Prostate gland (tissue), 2 donors: ENCODE measurements at regions of chr6 and their contacts with region 1.

Region 1: GRCh38 chr6:73520688-73521350 is at the start of gene EEF1A1:
- DNase-seq: peak; percentile 100
- H3K4me3 ChIP-seq: peak within 1 kb of the TSS; percentile 88 to 97
- H3K27ac ChIP-seq: peak within 1 kb of the TSS; percentile 100
- H3K4me1 ChIP-seq: peaks cover 6% of the 10 kb centered on the region
- H3K27me3 ChIP-seq: no peaks in the 10 kb centered on the region
- CTCF ChIP-seq: peak in 2 of 4 experiments; percentile 11 to 19
- POLR2A ChIP-seq: peak; percentile 99
- total RNA-seq, gene EEF1A1: 6,474 to 10,301 TPM

Region 2: GRCh38 chr6:73481969-73482368 is 38.9 kb before region 1 on chr6:
- intact Hi-C with region 1: no loop called
- DNase-seq: no peak
- H3K4me3 ChIP-seq: no peak overlapping the region
- H3K27ac ChIP-seq: no peak overlapping the region
- H3K4me1 ChIP-seq: no peaks in the 10 kb centered on the region
- H3K27me3 ChIP-seq: no peaks in the 10 kb centered on the region
- CTCF ChIP-seq: no peak
- POLR2A ChIP-seq: no peak

Region 3: GRCh38 chr6:73585566-73586415 is 65.0 kb after region 1 on chr6:
- intact Hi-C with region 1: loop called (anchors 1 kb)
- DNase-seq: peak; percentile 73
- H3K4me3 ChIP-seq: peak overlapping the region in 1 of 2 donors; percentile 13
- H3K27ac ChIP-seq: peak overlapping the region; percentile 89 to 90
- H3K4me1 ChIP-seq: no peaks in the 10 kb centered on the region
- H3K27me3 ChIP-seq: no peaks in the 10 kb centered on the region
- CTCF ChIP-seq: no peak
- POLR2A ChIP-seq: peak; percentile 66

Region 4: DNA sequence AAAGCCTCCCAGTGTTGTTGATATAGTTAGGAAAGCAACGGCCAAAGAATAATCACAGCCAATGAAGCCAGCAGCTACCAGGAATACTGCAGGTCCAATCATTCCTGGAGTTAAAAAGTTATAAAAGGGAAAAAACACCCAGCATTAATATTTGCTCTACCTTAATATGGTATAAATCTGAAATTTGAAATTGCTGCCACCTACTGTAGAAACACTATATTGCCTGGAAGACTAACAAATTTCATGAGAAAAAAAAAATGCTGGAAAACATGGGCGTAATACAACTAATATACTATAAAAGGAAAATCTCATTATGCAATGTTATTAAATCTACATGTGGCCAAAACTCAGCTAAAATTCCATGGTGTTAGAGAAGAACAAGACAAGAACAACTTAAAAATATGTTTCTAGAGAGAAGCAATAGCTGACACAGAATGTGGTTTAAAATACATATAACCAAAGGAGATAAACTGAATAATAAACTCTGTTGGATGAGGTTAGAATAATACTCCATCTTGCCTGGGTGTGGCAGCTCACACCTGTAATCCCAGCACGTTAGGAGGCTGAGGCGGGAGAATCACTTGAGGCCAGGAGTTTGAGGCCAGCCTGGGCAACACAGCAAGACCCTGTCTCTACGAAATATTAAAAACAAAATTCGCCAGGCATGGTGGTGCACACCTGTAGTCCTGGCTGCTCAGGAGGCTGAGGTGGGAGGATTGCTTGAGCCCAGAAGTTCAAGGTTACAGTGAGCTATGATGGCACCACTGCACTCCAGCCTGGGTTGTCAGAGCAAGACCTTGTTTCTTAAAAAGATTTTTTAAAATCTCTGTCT is 89.8 kb after region 1 on chr6:
- intact Hi-C with region 1: loop called (anchors 1 kb)
- DNase-seq: no peak
- H3K4me3 ChIP-seq: no peak overlapping the region
- H3K27ac ChIP-seq: no peak overlapping the region
- H3K4me1 ChIP-seq: no peaks in the 10 kb centered on the region
- H3K27me3 ChIP-seq: no peaks in the 10 kb centered on the region
- CTCF ChIP-seq: peak; percentile 29 to 78 (median 70)
- POLR2A ChIP-seq: no peak

Region 5: GRCh38 chr6:73653571-73654424 is 133.0 kb after region 1 on chr6 and contains the start of gene SLC17A5:
- intact Hi-C with region 1: loop called (anchors 2 kb)
- DNase-seq: peak; percentile 92
- H3K4me3 ChIP-seq: peak within 1 kb of the TSS; percentile 98 to 100
- H3K27ac ChIP-seq: peak within 1 kb of the TSS; percentile 98
- H3K4me1 ChIP-seq: no peaks in the 10 kb centered on the region
- H3K27me3 ChIP-seq: no peaks in the 10 kb centered on the region
- CTCF ChIP-seq: peak in 1 of 4 experiments; percentile 11
- POLR2A ChIP-seq: peak; percentile 68
- total RNA-seq, gene SLC17A5: 17.9 to 32.3 TPM

Region 6: GRCh38 chr6:73811706-73812105 is 290.9 kb after region 1 on chr6:
- intact Hi-C with region 1: no loop called
- DNase-seq: no peak
- H3K4me3 ChIP-seq: no peak overlapping the region
- H3K27ac ChIP-seq: no peak overlapping the region
- H3K4me1 ChIP-seq: no peaks in the 10 kb centered on the region
- H3K27me3 ChIP-seq: no peaks in the 10 kb centered on the region
- CTCF ChIP-seq: no peak
- POLR2A ChIP-seq: no peak

Region 7: GRCh38 chr6:75243333-75244062 is 1722.7 kb after region 1 on chr6 and contains the start of gene COX7A2:
- intact Hi-C with region 1: loop called (anchors 5 kb)
- DNase-seq: peak; percentile 94
- H3K4me3 ChIP-seq: peak within 1 kb of the TSS; percentile 78
- H3K27ac ChIP-seq: peak within 1 kb of the TSS; percentile 93 to 95
- H3K4me1 ChIP-seq: peaks cover 2% of the 10 kb centered on the region
- H3K27me3 ChIP-seq: no peaks in the 10 kb centered on the region
- CTCF ChIP-seq: no peak
- POLR2A ChIP-seq: peak; percentile 66
- total RNA-seq, gene COX7A2: 136 to 724 TPM